Activated CD8-positive, alpha-beta T cell treated with anti-CD3 and anti-CD28 coated beads, Interleukin-2, amount 10 ng/mL, durations not matched to agents 7 days and 5 days (primary cell): ENCODE measurements at regions of chr16 and their contacts with region 1.

Region 1: DNA sequence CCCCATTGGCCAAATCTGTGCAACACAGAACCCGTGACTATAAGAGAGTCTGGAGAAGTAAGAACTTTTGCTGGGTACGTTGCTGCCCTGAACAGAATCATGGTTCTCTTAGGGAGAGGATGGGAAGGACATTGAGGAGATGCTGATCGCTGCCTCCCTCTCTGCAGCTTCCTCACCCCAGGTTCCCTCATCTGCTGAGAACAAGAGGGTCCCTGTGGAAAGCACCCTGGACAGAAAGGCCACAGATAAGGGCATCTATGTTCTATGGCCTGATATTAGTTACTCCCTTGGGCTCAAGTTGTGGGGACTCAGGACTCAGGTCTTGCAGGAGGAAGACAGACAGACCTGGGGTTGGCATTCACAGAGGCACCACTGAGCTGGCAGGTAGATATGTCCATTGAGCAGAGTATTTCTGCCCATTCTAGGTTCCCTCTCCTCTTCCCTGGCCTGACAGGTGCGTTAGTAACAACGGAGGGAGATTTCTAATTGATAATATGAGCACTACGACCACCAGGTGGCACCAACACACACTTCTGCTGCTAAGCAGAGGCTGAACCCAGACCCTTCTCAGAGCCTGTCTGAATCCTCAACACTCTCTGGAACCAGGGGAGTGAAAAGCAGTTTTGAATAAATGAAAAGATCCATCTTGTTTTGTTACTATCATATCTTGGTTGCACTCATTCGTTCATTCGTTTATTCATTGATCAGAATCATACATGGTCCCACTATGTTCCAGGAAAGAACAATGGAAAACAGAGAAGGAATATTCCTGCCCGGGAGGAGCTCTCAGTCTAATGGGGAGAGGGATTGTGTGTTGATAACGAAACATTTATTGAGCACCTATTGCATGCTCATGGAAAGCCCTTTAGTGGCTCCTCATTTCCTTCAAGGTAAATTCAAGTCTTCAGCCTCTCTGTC is 56.4 kb downstream of the SLC6A2 start:
- DNase-seq: peak; percentile 71
- ATAC-seq: peak; percentile 51
- H3K4me3 Mint-ChIP-seq: no peak overlapping the region
- H3K27ac Mint-ChIP-seq: no peak overlapping the region
- H3K4me1 Mint-ChIP-seq: no peaks in the 10 kb centered on the region
- H3K27me3 Mint-ChIP-seq: no peaks in the 10 kb centered on the region

Region 2: GRCh38 chr16:55585631-55586030 is 126.6 kb before region 1 on chr16:
- CTCF ChIA-PET with region 1: no interaction called
- POLR2A ChIA-PET with region 1: no interaction called
- DNase-seq: no peak
- ATAC-seq: no peak
- H3K4me3 Mint-ChIP-seq: no peak overlapping the region
- H3K27ac Mint-ChIP-seq: no peak overlapping the region
- H3K4me1 Mint-ChIP-seq: no peaks in the 10 kb centered on the region
- H3K27me3 Mint-ChIP-seq: peaks cover 4% of the 10 kb centered on the region

Region 3: DNA sequence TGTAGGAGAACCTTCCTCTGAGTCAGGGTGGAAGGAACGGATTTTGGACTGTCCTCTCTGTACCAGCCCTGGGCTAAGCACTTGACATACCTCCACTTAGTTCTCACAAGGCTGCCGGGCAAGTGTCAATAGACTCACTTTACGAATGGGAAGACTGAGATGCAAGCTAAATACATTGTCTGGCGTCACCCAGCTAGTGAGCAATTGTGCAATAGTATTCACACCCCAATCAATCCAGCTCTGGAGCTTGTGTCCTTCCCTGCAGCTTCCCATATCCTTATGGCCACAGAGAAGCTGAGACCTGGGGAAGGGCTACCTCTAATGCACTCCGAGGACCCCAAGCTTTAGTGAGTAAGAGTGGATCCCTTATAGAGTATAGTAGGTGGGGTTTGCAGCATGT is 16.6 kb before region 1 on chr16:
- CTCF ChIA-PET with region 1: no interaction called
- POLR2A ChIA-PET with region 1: no interaction called
- DNase-seq: no peak
- ATAC-seq: no peak
- H3K4me3 Mint-ChIP-seq: no peak overlapping the region
- H3K27ac Mint-ChIP-seq: no peak overlapping the region
- H3K4me1 Mint-ChIP-seq: no peaks in the 10 kb centered on the region
- H3K27me3 Mint-ChIP-seq: peaks cover 2% of the 10 kb centered on the region

Region 4: DNA sequence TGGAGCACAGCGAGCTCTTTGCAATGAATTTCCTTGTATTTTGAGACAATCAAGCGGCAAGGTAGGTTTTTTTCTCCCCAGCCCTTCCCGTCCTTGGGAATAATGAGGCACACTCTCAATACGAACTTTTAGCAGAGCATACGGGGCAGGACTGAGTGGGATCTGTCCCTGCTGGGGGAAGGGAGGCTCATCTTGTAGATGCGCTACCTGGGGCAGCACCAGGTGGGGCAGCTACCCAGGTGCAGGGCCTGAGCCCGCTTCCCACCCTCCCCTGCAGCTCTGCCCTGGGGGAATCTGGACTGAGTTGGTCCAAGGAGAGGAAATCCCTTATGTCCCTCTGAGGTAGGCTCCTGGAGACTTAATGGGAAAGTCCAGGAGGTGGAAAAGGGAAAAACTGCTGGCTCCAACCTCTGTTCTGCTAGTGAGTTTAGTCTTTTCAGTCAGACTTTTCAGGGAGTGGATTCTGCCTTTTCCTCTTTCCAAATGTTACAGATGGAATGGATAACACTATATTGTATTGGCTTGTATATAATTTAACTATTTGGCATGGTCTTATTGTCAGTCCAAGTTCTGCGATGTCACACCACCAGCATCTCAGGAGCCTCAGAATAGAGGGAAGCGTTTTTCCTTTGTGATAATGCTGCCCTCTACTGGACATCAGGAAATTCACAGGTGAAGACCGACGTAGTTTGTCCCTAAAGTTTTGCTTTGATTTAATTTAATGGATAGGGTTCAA is 130.3 kb after region 1 on chr16:
- CTCF ChIA-PET with region 1: interaction called, 11 read pairs
- POLR2A ChIA-PET with region 1: no interaction called
- DNase-seq: peak; percentile 38
- ATAC-seq: peak; percentile 36
- H3K4me3 Mint-ChIP-seq: no peak overlapping the region
- H3K27ac Mint-ChIP-seq: no peak overlapping the region
- H3K4me1 Mint-ChIP-seq: peaks cover 5% of the 10 kb centered on the region
- H3K27me3 Mint-ChIP-seq: peaks cover 7% of the 10 kb centered on the region